A673 (cell line): ENCODE measurements at regions of chr7 and their contacts with region 1.

Region 1: GRCh38 chr7:120138497-120138896 is 134.5 kb upstream of the KCND2 start:
- DNase-seq: no peak
- H3K4me3 ChIP-seq: no peak overlapping the region
- H3K27ac ChIP-seq: no peak overlapping the region
- H3K4me1 ChIP-seq: no peaks in the 10 kb centered on the region
- H3K27me3 ChIP-seq: no peaks in the 10 kb centered on the region
- CTCF ChIP-seq: no peak

Region 2: DNA sequence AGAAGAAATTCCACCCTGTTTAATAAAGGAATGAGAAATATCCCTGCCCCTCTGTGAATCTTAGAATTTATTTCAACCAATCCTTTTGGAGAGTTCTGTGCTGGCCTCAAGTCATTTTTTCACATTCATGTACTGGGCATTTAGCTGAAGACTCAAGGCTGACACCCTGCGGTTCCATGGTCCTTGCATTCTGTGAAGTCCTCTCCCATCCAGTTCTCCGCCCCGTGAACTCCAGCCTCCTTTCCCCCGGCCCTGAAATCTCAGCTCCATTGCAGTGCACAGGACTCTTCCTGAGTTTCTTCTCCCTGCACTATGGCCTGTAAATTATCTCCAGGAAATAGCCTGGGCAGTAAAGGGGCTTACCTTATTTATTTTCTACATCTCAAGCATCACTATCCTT is 48.5 kb before region 1 on chr7:
- CTCF ChIA-PET with region 1: no interaction called
- POLR2A ChIA-PET with region 1: no interaction called
- intact Hi-C with region 1: loop called (anchors 2 kb)
- DNase-seq: no peak
- H3K4me3 ChIP-seq: no peak overlapping the region
- H3K27ac ChIP-seq: no peak overlapping the region
- H3K4me1 ChIP-seq: no peaks in the 10 kb centered on the region
- H3K27me3 ChIP-seq: no peaks in the 10 kb centered on the region
- CTCF ChIP-seq: no peak